H1 (cell line): ENCODE measurements at regions of chr5 and their contacts with region 1.

Region 1: GRCh38 chr5:176537608-176538504 is 654 bp upstream of the RNF44 start:
- DNase-seq: peak; percentile 89 to 98
- H3K4me3 ChIP-seq: peak overlapping the region; percentile 83 to 98 (median 93)
- H3K27ac ChIP-seq: peak overlapping the region; percentile 97
- H3K4me1 ChIP-seq: peaks cover 13 to 38% (median 35%) of the 10 kb centered on the region in 4 experiments
- H3K27me3 ChIP-seq: no peaks in the 10 kb centered on the region; a peak in 1 of 7 replicates
- CTCF ChIP-seq: no peak
- EP300 ChIP-seq: no peak
- POLR2A ChIP-seq: peak in 1 of 2 experiments; percentile 91; a peak in 2 of 3 replicates
- RAD21 ChIP-seq: no peak

Region 2: GRCh38 chr5:175778951-175779538 is 758.8 kb before region 1 on chr5:
- CTCF ChIA-PET with region 1: no interaction called
- POLR2A ChIA-PET with region 1: no interaction called
- DNase-seq: no peak
- H3K4me3 ChIP-seq: no peak overlapping the region
- H3K27ac ChIP-seq: no peak overlapping the region
- H3K4me1 ChIP-seq: peaks cover 0 to 2% (median 0%) of the 10 kb centered on the region in 4 experiments; a peak in 1 of 7 replicates
- H3K27me3 ChIP-seq: peaks cover 0 to 3% (median 1%) of the 10 kb centered on the region in 4 experiments; a peak in 3 of 7 replicates
- CTCF ChIP-seq: no peak
- EP300 ChIP-seq: no peak
- POLR2A ChIP-seq: no peak
- RAD21 ChIP-seq: no peak

Region 3: GRCh38 chr5:176388444-176389134 is 149.3 kb before region 1 on chr5 and contains the starts of genes HIGD2A and NOP16:
- CTCF ChIA-PET with region 1: no interaction called
- POLR2A ChIA-PET with region 1: interaction called, 31 read pairs
- DNase-seq: peak; percentile 93 to 96
- H3K4me3 ChIP-seq: peak within 1 kb of the TSS; percentile 92 to 96 (median 95)
- H3K27ac ChIP-seq: peak within 1 kb of the TSS; percentile 98
- H3K4me1 ChIP-seq: peaks cover 0 to 5% (median 1%) of the 10 kb centered on the region in 4 experiments; a peak in 2 of 7 replicates
- H3K27me3 ChIP-seq: no peaks in the 10 kb centered on the region
- CTCF ChIP-seq: no peak
- EP300 ChIP-seq: peak in 1 of 2 experiments; percentile 66; a peak in 1 of 3 replicates
- POLR2A ChIP-seq: peak; percentile 82 to 87
- RAD21 ChIP-seq: no peak
- total RNA-seq, gene HIGD2A: 95.5 and 104 TPM in 2 replicates
- total RNA-seq, gene NOP16: 65.2 and 65.9 TPM in 2 replicates

Region 4: DNA sequence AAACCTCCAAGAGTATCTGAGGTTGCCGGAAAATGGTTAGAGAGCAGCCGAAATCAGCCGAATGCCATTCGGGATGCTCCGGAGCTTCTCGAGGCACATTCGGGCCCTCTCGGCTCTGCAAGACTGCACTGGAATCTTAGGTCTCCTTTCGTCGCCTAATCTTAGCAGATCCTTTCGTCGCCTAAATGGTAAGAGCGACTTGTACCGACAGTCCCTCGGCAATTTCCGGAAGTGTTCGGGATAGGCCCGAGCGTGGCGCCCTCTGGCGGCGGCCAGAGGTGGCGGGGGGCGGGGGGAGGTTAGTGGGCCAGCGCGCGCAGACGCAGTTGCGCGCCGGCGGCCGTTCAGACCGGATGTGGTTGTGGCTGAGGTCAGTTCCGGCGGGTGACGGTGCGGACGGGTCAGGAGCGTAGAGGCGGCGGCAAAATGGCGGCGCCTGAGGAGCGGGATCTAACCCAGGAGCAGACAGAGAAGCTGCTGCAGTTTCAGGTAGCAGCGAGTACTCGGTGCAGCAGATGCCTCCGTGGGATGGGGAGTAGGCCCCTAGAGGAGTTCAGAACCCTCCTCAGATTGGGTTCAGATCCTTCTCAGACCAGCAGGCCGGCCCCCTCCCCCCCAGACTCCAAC is 89.8 kb before region 1 on chr5 and contains the start of gene FAF2:
- CTCF ChIA-PET with region 1: interaction called, 4 read pairs
- POLR2A ChIA-PET with region 1: interaction called, 24 read pairs
- DNase-seq: peak; percentile 97 to 100
- H3K4me3 ChIP-seq: peak within 1 kb of the TSS; percentile 93 to 100 (median 98)
- H3K27ac ChIP-seq: peak within 1 kb of the TSS; percentile 97
- H3K4me1 ChIP-seq: peaks cover 0 to 4% (median 0%) of the 10 kb centered on the region in 4 experiments; a peak in 1 of 7 replicates
- H3K27me3 ChIP-seq: no peaks in the 10 kb centered on the region
- CTCF ChIP-seq: peak; percentile 77 to 95 (median 82)
- EP300 ChIP-seq: no peak
- POLR2A ChIP-seq: peak; percentile 92 to 93
- RAD21 ChIP-seq: 0 out of 4 replicates have a peak, but pooled peaks of 1 of the 2 experiments have one; percentile 7
- total RNA-seq, gene FAF2: 35.8 and 36.2 TPM in 2 replicates

Region 5: GRCh38 chr5:176553262-176554077 is 15.6 kb after region 1 on chr5:
- CTCF ChIA-PET with region 1: interaction called, 27 read pairs
- POLR2A ChIA-PET with region 1: interaction called, 63 read pairs
- DNase-seq: no peak
- H3K4me3 ChIP-seq: no peak overlapping the region
- H3K27ac ChIP-seq: no peak overlapping the region
- H3K4me1 ChIP-seq: peaks cover 0 to 11% (median 4%) of the 10 kb centered on the region in 4 experiments; a peak in 3 of 7 replicates
- H3K27me3 ChIP-seq: no peaks in the 10 kb centered on the region
- CTCF ChIP-seq: no peak
- EP300 ChIP-seq: no peak
- POLR2A ChIP-seq: no peak
- RAD21 ChIP-seq: no peak

Region 6: DNA sequence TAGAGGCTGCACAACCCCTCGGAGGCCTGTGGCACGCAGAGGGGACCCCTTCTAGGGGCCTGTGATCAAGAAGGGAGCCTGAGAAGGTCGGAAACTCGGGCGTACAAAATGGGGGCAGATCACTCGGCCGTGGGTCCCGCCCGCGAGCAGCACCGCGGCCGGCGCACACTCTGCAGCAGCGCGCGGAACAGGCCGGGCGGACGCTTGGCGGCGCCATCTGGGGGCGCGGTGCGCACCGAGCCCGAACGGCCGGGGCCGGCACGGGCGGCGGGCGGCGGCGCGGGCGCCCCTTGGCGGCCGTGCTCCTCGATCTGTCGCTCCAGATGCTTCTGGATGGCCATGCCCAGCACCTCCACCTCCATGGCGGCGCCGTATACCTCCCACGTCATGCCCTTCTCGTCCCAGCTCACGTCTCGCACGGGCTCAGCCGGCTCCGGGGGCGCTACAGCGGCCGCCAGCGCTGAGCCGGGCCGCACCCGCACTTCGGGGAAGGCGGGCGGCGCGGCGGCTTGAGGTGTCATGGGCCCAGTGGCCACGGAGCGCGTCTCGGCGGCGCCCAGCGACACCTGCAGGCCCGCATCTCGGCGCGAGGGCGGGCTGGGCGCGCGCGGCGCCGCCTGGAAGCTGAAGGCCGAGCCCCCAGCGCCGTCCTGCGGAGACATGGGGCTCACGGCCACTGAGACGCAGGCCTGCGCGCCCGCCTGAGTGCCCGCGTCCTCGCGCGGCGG is 59.0 kb after region 1 on chr5:
- CTCF ChIA-PET with region 1: interaction called, 12 read pairs
- POLR2A ChIA-PET with region 1: interaction called, 23 read pairs
- DNase-seq: peak in 1 of 2 experiments; percentile 78
- H3K4me3 ChIP-seq: peak overlapping the region in 3 of 4 experiments; percentile 10 to 55 (median 21); a peak in 4 of 8 replicates
- H3K27ac ChIP-seq: no peak overlapping the region
- H3K4me1 ChIP-seq: 0 out of 7 replicates have a peak, but pooled peaks cover 0 to 2% (median 0%) of the 10 kb centered on the region in 4 experiments
- H3K27me3 ChIP-seq: peaks cover 0 to 19% (median 7%) of the 10 kb centered on the region in 4 experiments; a peak in 4 of 7 replicates
- CTCF ChIP-seq: peak in 2 of 3 experiments; percentile 54 to 75; a peak in 3 of 4 replicates
- EP300 ChIP-seq: no peak
- POLR2A ChIP-seq: no peak
- RAD21 ChIP-seq: peak in 1 of 2 experiments; percentile 33; a peak in 3 of 4 replicates

Region 7: DNA sequence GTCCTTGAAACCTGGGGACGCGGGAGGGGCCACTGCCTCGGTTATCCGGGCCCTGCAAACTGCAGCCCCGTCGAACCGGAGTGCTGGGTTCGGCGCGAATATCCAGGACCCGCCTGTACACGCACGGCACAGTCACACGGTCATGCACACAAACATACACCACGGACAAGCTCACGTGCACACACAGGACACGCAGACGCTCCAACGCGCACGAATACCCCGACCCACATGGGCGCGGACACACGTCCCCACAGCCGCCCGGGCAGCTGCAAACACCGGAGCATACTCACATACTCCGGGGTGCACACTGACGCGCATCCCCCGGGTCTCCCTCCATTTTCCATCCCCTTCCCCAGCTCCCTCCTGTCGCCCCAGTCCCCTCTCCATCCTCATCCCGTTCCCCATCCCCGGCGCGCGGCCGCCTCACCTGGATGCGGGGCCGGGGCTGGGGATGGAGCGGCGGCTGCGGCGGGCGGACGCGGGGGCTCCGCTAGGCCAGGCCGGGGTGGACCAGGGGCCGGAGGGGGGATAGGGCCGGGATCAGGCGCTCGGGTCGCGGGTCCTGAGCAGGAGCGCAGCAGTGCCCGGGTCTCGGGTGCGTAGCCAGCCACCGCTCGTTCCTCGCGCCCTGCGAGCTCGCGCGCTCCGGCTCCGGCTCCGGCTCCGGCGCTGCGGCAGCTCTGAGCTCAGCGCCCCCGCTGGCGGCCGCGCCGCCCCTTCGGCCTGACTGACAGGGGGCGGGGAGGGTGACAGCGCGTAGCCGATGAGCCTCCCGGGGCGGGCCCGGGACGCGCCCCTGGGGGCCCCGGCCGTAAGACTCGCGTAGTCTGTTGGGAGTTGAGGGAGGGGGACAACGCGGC is 92.2 kb after region 1 on chr5 and contains the starts of genes EIF4E1B and SNCB:
- CTCF ChIA-PET with region 1: no interaction called
- POLR2A ChIA-PET with region 1: interaction called, 10 read pairs
- DNase-seq: peak in 1 of 2 experiments; percentile 84
- H3K4me3 ChIP-seq: peak within 1 kb of the TSS; percentile 81 to 89 (median 84)
- H3K27ac ChIP-seq: no peak within 1 kb of the TSS
- H3K4me1 ChIP-seq: peaks cover 8 to 34% (median 11%) of the 10 kb centered on the region in 4 experiments
- H3K27me3 ChIP-seq: peaks cover 3 to 40% (median 34%) of the 10 kb centered on the region in 4 experiments
- CTCF ChIP-seq: no peak
- EP300 ChIP-seq: no peak
- POLR2A ChIP-seq: no peak
- RAD21 ChIP-seq: no peak
- total RNA-seq, gene EIF4E1B: 0.63 and 0.97 TPM in 2 replicates
- total RNA-seq, gene SNCB: 5.9 and 6.9 TPM in 2 replicates

Region 8: GRCh38 chr5:176733406-176734262 is 195.8 kb after region 1 on chr5:
- CTCF ChIA-PET with region 1: no interaction called
- POLR2A ChIA-PET with region 1: no interaction called
- DNase-seq: peak in 1 of 2 experiments; percentile 44
- H3K4me3 ChIP-seq: no peak overlapping the region
- H3K27ac ChIP-seq: no peak overlapping the region
- H3K4me1 ChIP-seq: peaks cover 0 to 11% (median 2%) of the 10 kb centered on the region in 4 experiments; a peak in 5 of 7 replicates
- H3K27me3 ChIP-seq: peaks cover 0 to 4% (median 2%) of the 10 kb centered on the region in 4 experiments; a peak in 3 of 7 replicates
- CTCF ChIP-seq: no peak
- EP300 ChIP-seq: no peak
- POLR2A ChIP-seq: no peak
- RAD21 ChIP-seq: no peak